ENCODE measurements at regions of chr15 and their contacts with region 1.

Region 1: DNA sequence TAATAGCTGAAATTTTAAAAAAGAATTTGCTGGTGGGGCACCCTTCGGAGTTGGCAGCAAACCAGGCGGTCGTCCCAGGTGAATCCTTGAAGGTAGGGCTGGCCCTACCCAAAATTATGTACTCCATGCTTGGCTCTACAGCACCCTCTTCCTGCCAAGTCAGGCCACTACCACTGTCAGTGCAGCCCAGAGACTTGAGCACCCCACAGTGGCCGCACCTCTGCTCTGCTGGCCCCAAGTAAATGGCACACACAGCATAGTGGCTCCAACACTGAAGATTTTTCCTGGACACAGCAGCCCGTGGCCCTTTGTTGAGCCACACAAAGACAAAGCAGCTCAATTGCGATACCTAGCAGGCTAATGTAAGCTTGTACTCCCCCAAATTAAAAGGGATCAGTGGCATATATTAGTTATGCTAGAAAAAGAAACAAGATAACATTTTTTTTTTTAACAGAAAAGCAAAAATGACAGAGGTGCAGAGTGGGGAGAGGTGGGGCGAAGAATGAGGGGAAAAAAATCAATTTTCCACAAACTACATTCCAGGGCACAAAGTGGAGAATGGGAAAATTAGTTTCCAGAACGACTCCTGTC is 250.5 kb downstream of the UACA start:
- DNase-seq: peak; percentile 53 to 80
- H3K4me3 ChIP-seq: no peak overlapping the region
- H3K27ac ChIP-seq: no peak overlapping the region
- H3K4me1 ChIP-seq: peaks cover 0 to 6% (median 3%) of the 10 kb centered on the region in 4 experiments; a peak in 4 of 7 replicates
- H3K27me3 ChIP-seq: no peaks in the 10 kb centered on the region
- CTCF ChIP-seq: peak; percentile 99 to 100 (median 100)
- EP300 ChIP-seq: no peak
- POLR2A ChIP-seq: no peak
- RAD21 ChIP-seq: peak; percentile 91 to 96

Region 2: GRCh38 chr15:70327856-70328678 is 184.8 kb before region 1 on chr15:
- CTCF ChIA-PET with region 1: no interaction called
- POLR2A ChIA-PET with region 1: no interaction called
- DNase-seq: peak in 1 of 2 experiments; percentile 39
- H3K4me3 ChIP-seq: no peak overlapping the region
- H3K27ac ChIP-seq: no peak overlapping the region
- H3K4me1 ChIP-seq: peaks cover 0 to 7% (median 0%) of the 10 kb centered on the region in 4 experiments; a peak in 2 of 7 replicates
- H3K27me3 ChIP-seq: no peaks in the 10 kb centered on the region
- CTCF ChIP-seq: no peak
- EP300 ChIP-seq: no peak
- POLR2A ChIP-seq: no peak
- RAD21 ChIP-seq: no peak

Region 3: DNA sequence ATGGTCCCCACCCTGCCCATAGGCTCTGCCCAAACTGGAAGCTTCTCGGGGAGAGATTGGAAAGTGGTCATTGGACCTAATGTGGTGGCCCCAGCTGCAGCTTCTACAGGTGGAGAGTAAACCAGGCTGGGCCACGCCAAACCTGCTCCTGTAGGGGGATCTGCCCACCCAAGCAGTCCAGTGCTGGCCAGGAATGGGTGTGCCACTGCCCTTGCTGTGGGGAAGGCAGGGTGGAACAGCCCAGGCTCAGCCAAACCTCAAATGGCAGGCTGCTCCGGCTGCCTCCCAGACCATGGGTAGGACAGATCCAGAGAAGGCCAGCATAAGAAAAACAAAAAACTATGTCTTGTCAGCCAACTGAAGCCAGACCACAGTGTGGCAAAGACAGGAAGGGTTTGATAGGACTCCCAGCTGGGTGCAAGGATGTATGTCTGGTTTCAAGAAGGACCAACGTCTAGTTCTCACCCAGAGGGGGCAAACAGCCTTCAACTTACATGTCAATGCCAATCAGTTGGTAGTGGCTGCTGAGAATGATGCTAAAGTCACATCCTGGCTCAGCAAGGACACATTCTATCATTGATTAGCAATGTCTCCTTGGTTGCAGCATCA is 16.8 kb before region 1 on chr15:
- CTCF ChIA-PET with region 1: interaction called, 13 read pairs
- POLR2A ChIA-PET with region 1: no interaction called
- DNase-seq: no peak
- H3K4me3 ChIP-seq: no peak overlapping the region
- H3K27ac ChIP-seq: no peak overlapping the region
- H3K4me1 ChIP-seq: no peaks in the 10 kb centered on the region; a peak in 2 of 7 replicates
- H3K27me3 ChIP-seq: no peaks in the 10 kb centered on the region
- CTCF ChIP-seq: no peak
- EP300 ChIP-seq: no peak
- POLR2A ChIP-seq: no peak
- RAD21 ChIP-seq: no peak

Region 4: GRCh38 chr15:70523616-70524015 is 10.7 kb after region 1 on chr15:
- CTCF ChIA-PET with region 1: interaction called, 31 read pairs
- POLR2A ChIA-PET with region 1: no interaction called
- DNase-seq: no peak
- H3K4me3 ChIP-seq: no peak overlapping the region
- H3K27ac ChIP-seq: no peak overlapping the region
- H3K4me1 ChIP-seq: peaks cover 1 to 9% (median 5%) of the 10 kb centered on the region in 4 experiments; a peak in 4 of 7 replicates
- H3K27me3 ChIP-seq: no peaks in the 10 kb centered on the region
- CTCF ChIP-seq: no peak
- EP300 ChIP-seq: no peak
- POLR2A ChIP-seq: no peak
- RAD21 ChIP-seq: no peak